Heart right ventricle (tissue), 16 donors: ENCODE measurements at regions of chr18 and their contacts with region 1.

Region 1: GRCh38 chr18:73136134-73136533 is 268.3 kb upstream of the NETO1 start:
- DNase-seq: no peak
- ATAC-seq: no peak
- H3K4me3 ChIP-seq: no peak overlapping the region
- H3K27ac ChIP-seq: no peak overlapping the region
- H3K4me1 ChIP-seq: no peaks in the 10 kb centered on the region
- H3K27me3 ChIP-seq: no peaks in the 10 kb centered on the region
- CTCF ChIP-seq: peak in 6 of 9 donors; percentile 29 to 51 (median 38)

Region 2: DNA sequence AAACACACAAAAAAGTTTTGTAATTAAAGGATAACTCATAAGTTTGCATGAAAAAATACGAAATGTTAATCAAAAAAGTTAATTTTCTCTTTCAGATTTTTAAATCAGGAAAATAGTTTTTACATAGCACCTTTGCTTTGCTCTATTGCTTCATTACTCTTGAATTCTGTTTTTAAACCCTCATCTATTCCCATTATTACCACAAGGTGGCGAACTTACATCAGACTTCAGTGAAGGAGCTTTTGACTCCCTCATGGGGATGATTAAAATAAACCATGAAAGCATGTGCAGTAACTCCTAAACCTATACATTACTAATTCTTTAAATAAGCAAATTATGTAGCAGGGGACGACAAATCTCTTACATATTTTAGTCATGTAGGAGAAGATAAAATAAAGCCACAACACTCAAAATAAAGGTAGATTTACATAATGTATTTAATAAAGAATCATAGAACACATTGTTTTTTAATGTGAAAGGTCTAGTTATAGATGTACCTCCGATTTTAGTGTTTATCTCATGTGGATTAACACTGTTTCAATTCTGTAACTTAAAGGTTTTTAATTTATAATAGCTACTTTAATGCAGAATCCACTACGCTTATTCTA is 373.5 kb before region 1 on chr18:
- intact Hi-C with region 1: loop called (anchors 5 to 10 kb)
- DNase-seq: peak in 1 of 2 donors; percentile 17
- ATAC-seq: no peak
- H3K4me3 ChIP-seq: no peak overlapping the region
- H3K27ac ChIP-seq: no peak overlapping the region
- H3K4me1 ChIP-seq: no peaks in the 10 kb centered on the region
- H3K27me3 ChIP-seq: no peaks in the 10 kb centered on the region
- CTCF ChIP-seq: peak; percentile 47 to 85 (median 78)

Region 3: GRCh38 chr18:72768681-72769229 is 367.4 kb before region 1 on chr18:
- intact Hi-C with region 1: loop called (anchors 5 to 10 kb)
- DNase-seq: no peak
- ATAC-seq: no peak
- H3K4me3 ChIP-seq: no peak overlapping the region
- H3K27ac ChIP-seq: no peak overlapping the region
- H3K4me1 ChIP-seq: no peaks in the 10 kb centered on the region
- H3K27me3 ChIP-seq: peaks cover 0 to 4% (median 0%) of the 10 kb centered on the region in 7 donors
- CTCF ChIP-seq: peak in 1 of 9 donors; percentile 23